ENCODE measurements at regions of chr4 and their contacts with region 1.

Region 1: DNA sequence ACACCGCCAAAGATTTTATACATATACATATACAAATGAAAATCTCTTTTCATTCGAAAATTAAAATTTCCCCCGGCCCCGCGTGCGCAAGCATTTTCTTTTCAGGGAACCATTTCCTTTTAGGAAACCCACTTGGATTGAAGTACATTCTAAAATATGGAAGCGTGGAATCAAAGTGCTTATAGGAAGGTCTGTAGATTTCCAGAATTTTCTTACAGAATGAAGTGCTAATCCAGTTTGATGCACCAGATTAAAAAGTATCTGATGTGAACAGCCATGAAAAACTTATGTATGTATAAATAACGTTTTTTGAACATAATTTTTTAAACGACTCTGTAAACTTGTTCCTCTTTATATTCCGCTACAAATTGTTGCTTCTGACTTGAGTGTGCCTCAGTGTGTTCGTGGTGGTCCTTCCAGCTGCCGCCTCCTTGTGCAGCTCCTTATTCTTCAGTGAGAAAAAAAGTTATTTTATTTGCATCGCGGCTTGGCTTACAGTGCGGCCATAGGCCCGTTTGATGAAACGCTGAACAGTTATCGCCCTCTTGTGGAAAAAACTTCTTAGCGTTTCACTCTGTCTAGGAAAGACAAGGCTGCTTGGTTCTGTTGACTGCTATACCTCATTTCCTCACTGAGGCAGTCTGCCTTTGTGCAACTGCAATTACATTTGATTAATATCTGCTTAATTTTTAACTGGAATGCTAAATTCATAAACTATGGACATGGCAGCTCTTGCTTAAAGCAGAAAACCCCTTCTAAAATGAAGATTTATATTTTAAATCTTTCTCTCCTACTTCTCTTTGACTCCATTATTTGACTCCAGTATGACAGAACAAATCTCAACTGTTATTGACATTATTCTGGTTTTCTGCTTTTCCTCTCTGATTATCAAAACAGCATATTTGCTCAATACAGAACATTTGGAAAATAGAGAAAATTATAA is 4.7 kb upstream of the NKX6-1 start:
- DNase-seq: no peak
- H3K4me3 ChIP-seq: no peak overlapping the region
- H3K27ac ChIP-seq: no peak overlapping the region
- H3K4me1 ChIP-seq: peaks cover 11% of the 10 kb centered on the region
- H3K27me3 ChIP-seq: peaks cover 58% of the 10 kb centered on the region
- CTCF ChIP-seq: peak; percentile 60

Region 2: DNA sequence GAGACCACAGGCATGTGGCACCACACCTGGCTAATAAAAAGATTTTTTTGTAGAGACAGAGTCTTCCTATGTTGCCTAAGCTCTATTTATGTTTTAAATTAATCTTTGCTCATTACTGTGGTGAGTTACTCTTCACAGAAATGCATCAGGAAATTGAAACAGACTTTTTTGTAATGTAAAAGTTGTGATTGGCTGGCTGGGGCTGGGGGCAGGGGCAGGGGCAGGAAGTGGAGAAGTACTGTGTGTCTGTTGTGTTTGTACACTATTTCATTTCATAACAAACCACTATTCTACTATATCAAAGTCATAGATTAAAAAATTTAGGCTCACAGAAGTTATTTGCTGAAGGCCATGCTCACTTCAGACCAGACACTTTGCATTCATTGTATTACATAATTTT is 999.8 kb before region 1 on chr4:
- intact Hi-C with region 1: loop called (anchors 10 kb)
- DNase-seq: no peak
- H3K4me3 ChIP-seq: no peak overlapping the region
- H3K27ac ChIP-seq: no peak overlapping the region
- H3K4me1 ChIP-seq: no peaks in the 10 kb centered on the region
- H3K27me3 ChIP-seq: no peaks in the 10 kb centered on the region
- CTCF ChIP-seq: no peak

Region 3: DNA sequence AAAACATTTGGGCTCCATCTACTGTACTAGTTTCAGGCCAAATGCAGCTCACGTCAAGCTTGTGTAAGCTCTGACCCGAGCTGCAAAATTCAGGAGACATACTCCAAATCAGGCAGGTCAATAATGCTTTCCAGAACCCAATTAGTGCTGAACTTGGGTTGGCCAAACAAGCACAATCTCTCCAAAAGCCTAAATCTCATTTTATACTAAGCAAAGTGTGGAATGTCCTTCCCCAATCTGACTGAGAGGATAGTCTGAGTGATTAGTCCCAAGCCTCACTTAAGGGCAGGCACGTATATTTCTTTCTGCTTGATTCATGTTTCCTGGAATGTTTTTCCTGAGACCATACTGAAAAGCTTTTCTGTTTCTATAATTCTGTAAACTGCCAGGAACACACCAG is 84.6 kb before region 1 on chr4:
- intact Hi-C with region 1: no loop called
- DNase-seq: no peak
- H3K4me3 ChIP-seq: no peak overlapping the region
- H3K27ac ChIP-seq: no peak overlapping the region
- H3K4me1 ChIP-seq: no peaks in the 10 kb centered on the region
- H3K27me3 ChIP-seq: no peaks in the 10 kb centered on the region
- CTCF ChIP-seq: no peak